HepG2 (cell line): ENCODE measurements at regions of chr3 and their contacts with region 1.

Region 1: DNA sequence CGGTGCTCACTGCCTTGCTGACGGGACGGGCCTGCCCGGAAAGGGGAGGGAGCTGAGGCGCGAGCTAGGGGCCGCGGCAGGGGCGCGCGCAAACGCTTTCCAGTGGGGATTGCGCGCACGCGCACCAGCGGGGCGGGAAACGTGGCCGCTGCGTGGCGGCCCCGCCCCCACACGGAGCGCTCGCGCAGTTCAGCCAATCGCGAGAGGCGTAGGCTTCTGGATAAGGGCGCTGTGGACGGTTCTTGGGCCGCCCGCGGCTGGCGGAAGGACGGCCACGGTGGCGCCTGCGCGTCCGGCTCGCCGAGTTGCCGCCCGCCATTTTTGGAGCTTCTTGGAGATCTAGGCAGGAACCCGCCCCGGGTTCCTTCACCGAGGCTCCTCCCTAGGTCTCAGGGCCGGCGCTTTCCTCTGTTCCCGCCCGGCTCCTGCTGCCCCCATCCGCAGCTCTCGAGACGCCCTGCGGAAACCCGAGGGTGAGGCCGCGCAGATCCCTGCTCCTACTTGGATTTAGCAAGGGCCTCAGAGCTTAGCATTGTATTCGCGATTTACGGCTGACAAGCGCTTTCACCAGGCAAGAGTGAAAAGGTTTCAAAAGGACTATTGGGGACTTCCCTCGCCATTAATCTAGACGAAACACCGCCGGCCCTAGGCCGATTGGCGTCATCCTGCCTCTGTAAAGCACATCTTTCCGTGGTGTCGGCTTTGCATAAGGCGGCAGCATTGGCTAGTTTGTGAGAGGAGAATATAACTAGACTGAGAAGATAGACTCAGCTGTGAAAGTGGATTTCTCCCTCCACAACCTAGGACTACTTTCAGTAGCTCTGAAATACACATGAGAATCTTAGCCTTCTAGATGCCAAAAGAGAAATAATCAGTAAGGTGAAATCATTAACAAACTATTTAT is 496 bp upstream of the STAG1 start:
- DNase-seq: peak; percentile 93
- ATAC-seq: peak; percentile 94
- H3K4me3 ChIP-seq: peak overlapping the region; percentile 61 to 86 (median 81)
- H3K27ac ChIP-seq: peak overlapping the region; percentile 97
- H3K4me1 ChIP-seq: peaks cover 31% of the 10 kb centered on the region
- H3K27me3 ChIP-seq: no peaks in the 10 kb centered on the region
- CTCF ChIP-seq: 0 out of 2 replicates have a peak, but pooled peaks have one; percentile 44
- EP300 ChIP-seq: 0 out of 4 replicates have a peak, but pooled peaks of 1 of the 2 experiments have one; percentile 7
- POLR2A ChIP-seq: peak; percentile 73 to 95; a peak in 3 of 4 replicates
- RAD21 ChIP-seq: no peak; the same call in 1 of the 2 replicates

Region 2: GRCh38 chr3:136075218-136075808 is 677.4 kb before region 1 on chr3:
- CTCF ChIA-PET with region 1: interaction called, 9 read pairs
- POLR2A ChIA-PET with region 1: interaction called, 4 read pairs
- in situ Hi-C with region 1: loop called (anchors 10 kb)
- intact Hi-C with region 1: no loop called
- DNase-seq: peak; percentile 72
- ATAC-seq: peak; percentile 63
- H3K4me3 ChIP-seq: no peak overlapping the region
- H3K27ac ChIP-seq: no peak overlapping the region
- H3K4me1 ChIP-seq: no peaks in the 10 kb centered on the region
- H3K27me3 ChIP-seq: no peaks in the 10 kb centered on the region; a peak in 1 of 5 replicates
- CTCF ChIP-seq: peak; percentile 88
- EP300 ChIP-seq: no peak
- POLR2A ChIP-seq: no peak
- RAD21 ChIP-seq: peak; percentile 81

Region 3: DNA sequence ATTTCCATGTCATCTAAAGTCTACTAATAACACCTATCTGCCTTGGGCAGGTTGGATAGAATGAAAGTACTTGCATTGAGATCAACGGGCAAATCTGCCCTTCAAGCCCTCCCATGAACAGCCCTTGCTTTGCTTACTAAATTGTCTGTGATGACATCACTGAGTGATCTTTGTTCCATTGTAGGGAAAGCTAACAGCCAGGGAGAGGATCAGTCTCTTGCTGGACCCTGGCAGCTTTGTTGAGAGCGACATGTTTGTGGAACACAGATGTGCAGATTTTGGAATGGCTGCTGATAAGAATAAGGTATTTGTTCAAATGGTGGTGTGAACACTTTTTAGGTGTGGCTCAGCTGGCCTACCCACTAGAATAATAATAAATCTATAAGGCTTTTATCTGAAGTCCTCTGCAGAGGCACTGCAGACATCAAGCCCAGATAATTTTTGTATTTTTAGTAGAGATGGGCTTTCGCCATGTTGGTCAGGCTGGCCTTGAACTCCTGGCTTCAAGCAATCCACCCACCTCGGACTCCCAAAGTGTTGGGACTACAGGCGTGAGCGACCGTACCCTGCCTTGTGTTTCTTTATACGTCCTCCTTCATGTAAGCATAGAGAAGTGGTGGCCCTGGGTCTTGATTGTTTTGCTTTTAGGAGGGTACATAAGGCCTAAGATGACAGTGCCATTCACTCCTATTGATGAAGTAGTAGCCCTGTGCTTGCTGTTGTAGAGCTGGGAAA is 496.8 kb before region 1 on chr3:
- CTCF ChIA-PET with region 1: no interaction called
- POLR2A ChIA-PET with region 1: interaction called, 10 read pairs
- in situ Hi-C with region 1: no loop called
- intact Hi-C with region 1: loop called (anchors 5 kb)
- DNase-seq: peak; percentile 97
- ATAC-seq: peak; percentile 93
- H3K4me3 ChIP-seq: peak overlapping the region in 2 of 3 experiments; percentile 23 to 53; a peak in 3 of 6 replicates
- H3K27ac ChIP-seq: peak overlapping the region; percentile 89
- H3K4me1 ChIP-seq: peaks cover 40% of the 10 kb centered on the region
- H3K27me3 ChIP-seq: no peaks in the 10 kb centered on the region
- CTCF ChIP-seq: no peak
- EP300 ChIP-seq: peak in 1 of 2 experiments; percentile 48; a peak in 2 of 4 replicates
- POLR2A ChIP-seq: peak; percentile 25 to 55; a peak in 1 of 4 replicates
- RAD21 ChIP-seq: no peak

Region 4: GRCh38 chr3:136498919-136499447 is 253.7 kb before region 1 on chr3:
- CTCF ChIA-PET with region 1: no interaction called
- POLR2A ChIA-PET with region 1: interaction called, 13 read pairs
- in situ Hi-C with region 1: no loop called
- intact Hi-C with region 1: no loop called
- DNase-seq: peak; percentile 88
- ATAC-seq: peak; percentile 98
- H3K4me3 ChIP-seq: no peak overlapping the region; a peak in 1 of 6 replicates
- H3K27ac ChIP-seq: peak overlapping the region; percentile 67
- H3K4me1 ChIP-seq: peaks cover 39% of the 10 kb centered on the region
- H3K27me3 ChIP-seq: no peaks in the 10 kb centered on the region
- CTCF ChIP-seq: no peak
- EP300 ChIP-seq: peak in 1 of 2 experiments; percentile 83; a peak in 2 of 4 replicates
- POLR2A ChIP-seq: no peak
- RAD21 ChIP-seq: no peak; the same call in 1 of the 2 replicates

Region 5: GRCh38 chr3:136584728-136585127 is 167.9 kb before region 1 on chr3:
- CTCF ChIA-PET with region 1: no interaction called
- POLR2A ChIA-PET with region 1: interaction called, 17 read pairs
- in situ Hi-C with region 1: no loop called
- intact Hi-C with region 1: no loop called
- DNase-seq: no peak
- ATAC-seq: no peak
- H3K4me3 ChIP-seq: no peak overlapping the region
- H3K27ac ChIP-seq: no peak overlapping the region
- H3K4me1 ChIP-seq: peaks cover 25% of the 10 kb centered on the region
- H3K27me3 ChIP-seq: no peaks in the 10 kb centered on the region
- CTCF ChIP-seq: no peak
- EP300 ChIP-seq: no peak
- POLR2A ChIP-seq: no peak
- RAD21 ChIP-seq: no peak

Region 6: DNA sequence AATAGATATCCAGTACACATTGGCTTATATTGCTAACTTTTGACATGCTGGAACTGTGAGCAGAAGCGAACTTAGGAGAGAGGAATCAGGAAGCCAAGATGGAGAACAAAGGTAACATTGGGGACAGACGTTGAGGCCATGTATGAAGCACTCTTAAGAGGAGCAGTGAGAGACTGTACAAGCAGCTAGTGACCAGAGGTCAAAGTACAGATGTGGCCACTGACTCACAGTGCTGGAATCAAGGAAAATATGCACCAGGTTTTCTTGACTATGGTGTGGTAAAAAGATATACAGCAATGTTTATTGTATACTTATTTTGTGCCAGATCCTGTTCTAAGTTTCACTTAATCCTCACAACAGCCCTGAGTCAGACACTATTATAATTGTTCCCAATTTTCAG is 203.1 kb after region 1 on chr3:
- CTCF ChIA-PET with region 1: no interaction called
- POLR2A ChIA-PET with region 1: interaction called, 12 read pairs
- in situ Hi-C with region 1: no loop called
- intact Hi-C with region 1: no loop called
- DNase-seq: peak; percentile 81
- ATAC-seq: peak; percentile 92
- H3K4me3 ChIP-seq: peak overlapping the region in 1 of 3 experiments; percentile 7; a peak in 1 of 6 replicates
- H3K27ac ChIP-seq: peak overlapping the region; percentile 41
- H3K4me1 ChIP-seq: peaks cover 38% of the 10 kb centered on the region
- H3K27me3 ChIP-seq: no peaks in the 10 kb centered on the region
- CTCF ChIP-seq: no peak
- EP300 ChIP-seq: peak in 1 of 2 experiments; percentile 43; a peak in 1 of 4 replicates
- POLR2A ChIP-seq: no peak
- RAD21 ChIP-seq: no peak